ENCODE measurements at regions of chrX and their contacts with region 1.

Region 1: DNA sequence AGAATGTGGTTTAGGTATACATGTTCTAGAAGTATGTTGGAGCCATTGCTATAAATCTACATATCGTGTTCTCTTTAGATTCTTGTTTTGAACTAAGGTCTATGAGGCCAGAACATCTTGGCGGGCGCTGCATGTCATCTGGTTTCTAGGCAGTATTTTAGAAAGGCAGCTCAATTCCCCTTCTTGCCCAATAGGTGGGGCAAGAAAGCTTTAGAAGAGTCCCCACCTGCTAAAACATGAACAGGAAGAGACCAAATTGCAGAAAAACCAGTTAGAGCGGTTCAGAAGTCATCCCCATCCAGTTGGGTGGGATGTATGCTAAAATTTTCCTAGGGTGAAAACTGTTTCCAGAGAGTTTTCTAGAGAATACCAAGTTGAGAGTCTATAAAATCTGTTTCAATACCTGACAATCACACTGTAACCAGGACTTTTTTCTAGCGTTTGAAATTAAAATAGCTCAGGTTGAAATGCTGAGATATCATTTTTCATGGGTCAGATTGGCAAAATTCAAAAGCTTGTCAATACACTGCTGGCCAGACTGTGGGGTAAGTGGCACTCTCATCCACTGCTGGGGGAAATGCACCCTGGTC is 17.5 kb upstream of the SH3KBP1 start:
- DNase-seq: peak; percentile 79

Region 2: DNA sequence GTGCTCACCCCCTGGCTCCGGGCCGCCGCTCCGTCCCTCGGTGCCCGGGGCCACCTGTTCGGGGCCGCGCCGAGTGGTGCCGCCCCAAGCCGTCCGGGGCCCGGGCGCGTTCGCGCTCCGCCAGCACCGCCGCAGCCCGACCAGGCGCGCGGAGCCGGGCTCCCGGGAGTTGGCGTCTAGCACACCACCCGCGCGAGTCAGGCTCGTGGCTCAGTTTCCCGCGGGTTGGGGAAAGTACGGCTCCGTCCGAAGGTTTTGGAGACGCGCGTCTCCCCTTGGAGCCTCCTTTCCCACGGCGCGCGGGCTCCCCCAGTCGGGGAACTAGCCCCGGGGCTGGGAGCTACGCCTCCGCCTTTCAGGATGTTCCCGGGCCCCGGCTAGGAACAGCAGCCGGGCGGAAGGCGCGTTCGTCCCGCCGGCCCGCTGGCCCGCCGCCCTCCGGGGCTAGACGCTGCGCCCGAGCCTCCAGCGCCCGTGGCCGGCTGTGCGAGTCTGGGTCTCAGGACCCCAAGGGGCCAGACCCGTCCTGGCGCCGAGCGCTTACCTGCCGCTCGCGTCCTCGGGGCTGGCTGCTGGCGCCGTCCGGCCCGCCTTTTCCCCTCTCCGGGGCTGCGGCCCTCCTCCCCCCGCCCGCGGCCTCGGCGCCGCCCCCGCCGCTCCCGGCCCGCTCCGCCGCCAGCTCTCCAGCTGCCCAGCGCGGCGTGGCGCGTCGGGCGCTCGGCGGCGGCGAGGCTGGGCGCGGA is 782.8 kb before region 1 on chrX and contains the start of gene ADGRG2:
- in situ Hi-C with region 1: no loop called
- DNase-seq: peak; percentile 20

Region 3: GRCh38 chrX:19715711-19716638 is 188.9 kb before region 1 on chrX:
- in situ Hi-C with region 1: no loop called
- DNase-seq: no peak

Region 4: DNA sequence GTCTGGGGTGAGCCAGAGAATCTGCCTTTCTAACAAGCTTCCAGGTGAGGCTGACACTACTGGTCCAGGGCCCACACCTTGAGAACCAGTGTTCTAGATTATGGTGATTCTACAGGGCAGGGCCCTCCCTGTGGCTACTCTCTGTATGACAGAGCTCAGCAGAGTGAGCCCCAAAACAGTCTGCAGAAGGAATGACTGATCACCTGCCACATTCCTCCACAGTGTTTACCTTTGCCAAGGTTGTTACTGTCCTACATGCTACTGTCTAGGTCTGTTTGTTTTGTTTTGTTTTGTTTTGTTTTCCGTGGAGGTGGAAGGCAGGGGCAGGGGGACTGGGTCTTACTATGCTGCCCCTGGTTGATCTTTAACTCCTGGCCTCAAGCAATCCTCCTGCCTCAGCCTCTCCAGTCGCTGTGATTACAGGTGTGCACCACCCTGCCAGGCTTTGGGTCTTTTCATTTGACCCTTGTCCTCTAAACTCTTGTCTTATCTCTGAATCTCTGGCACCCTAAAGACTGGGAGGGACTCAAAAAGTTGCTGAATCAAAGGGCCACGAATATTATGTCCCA is 166.7 kb after region 1 on chrX:
- in situ Hi-C with region 1: loop called (anchors 10 kb)
- DNase-seq: no peak

Measured in KBM-7 (cell line).